ENCODE measurements at regions of chr1 and their contacts with region 1.

Region 1: DNA sequence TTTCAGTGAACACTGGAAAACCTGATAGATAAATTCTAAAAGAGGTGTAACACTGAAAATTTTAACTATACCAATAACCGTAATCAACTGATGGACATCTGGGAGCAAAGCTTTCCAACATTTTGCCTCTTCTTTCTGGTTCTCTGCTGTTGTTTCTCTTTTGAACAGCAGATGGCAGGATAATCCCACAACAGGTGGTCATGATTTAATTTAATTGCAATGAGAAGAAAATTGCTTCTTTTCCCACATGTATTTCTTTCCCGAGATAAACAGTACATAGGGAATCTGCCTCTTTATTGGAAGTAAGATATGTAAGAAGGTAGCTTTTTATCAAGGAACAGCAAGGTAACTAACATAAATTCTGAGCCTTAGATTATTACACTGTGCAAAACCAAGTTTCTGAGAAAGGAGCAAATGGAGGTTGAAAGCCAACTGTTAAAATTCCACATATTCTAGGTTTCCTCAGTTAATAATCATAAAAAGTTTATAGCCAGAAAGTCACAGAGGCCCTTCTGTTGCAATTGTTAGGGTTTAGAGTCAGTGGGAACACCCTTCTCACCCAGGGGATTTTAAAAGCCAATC is 72.9 kb downstream of the RPS6KA1 start:
- DNase-seq: no peak
- H3K4me3 ChIP-seq: no peak overlapping the region
- CTCF ChIP-seq: peak; percentile 47

Region 2: GRCh38 chr1:26582836-26583460 is 19.5 kb before region 1 on chr1:
- CTCF ChIA-PET with region 1: interaction called, 53 read pairs
- POLR2A ChIA-PET with region 1: no interaction called
- DNase-seq: no peak
- H3K4me3 ChIP-seq: no peak overlapping the region
- CTCF ChIP-seq: no peak

Region 3: GRCh38 chr1:26728645-26729044 is 126.2 kb after region 1 on chr1:
- CTCF ChIA-PET with region 1: interaction called, 13 read pairs
- POLR2A ChIA-PET with region 1: no interaction called
- DNase-seq: no peak
- H3K4me3 ChIP-seq: no peak overlapping the region
- CTCF ChIP-seq: no peak

Region 4: GRCh38 chr1:26811057-26811456 is 208.6 kb after region 1 on chr1:
- CTCF ChIA-PET with region 1: interaction called, 52 read pairs
- POLR2A ChIA-PET with region 1: no interaction called
- DNase-seq: no peak
- H3K4me3 ChIP-seq: no peak overlapping the region
- CTCF ChIP-seq: no peak

Region 5: DNA sequence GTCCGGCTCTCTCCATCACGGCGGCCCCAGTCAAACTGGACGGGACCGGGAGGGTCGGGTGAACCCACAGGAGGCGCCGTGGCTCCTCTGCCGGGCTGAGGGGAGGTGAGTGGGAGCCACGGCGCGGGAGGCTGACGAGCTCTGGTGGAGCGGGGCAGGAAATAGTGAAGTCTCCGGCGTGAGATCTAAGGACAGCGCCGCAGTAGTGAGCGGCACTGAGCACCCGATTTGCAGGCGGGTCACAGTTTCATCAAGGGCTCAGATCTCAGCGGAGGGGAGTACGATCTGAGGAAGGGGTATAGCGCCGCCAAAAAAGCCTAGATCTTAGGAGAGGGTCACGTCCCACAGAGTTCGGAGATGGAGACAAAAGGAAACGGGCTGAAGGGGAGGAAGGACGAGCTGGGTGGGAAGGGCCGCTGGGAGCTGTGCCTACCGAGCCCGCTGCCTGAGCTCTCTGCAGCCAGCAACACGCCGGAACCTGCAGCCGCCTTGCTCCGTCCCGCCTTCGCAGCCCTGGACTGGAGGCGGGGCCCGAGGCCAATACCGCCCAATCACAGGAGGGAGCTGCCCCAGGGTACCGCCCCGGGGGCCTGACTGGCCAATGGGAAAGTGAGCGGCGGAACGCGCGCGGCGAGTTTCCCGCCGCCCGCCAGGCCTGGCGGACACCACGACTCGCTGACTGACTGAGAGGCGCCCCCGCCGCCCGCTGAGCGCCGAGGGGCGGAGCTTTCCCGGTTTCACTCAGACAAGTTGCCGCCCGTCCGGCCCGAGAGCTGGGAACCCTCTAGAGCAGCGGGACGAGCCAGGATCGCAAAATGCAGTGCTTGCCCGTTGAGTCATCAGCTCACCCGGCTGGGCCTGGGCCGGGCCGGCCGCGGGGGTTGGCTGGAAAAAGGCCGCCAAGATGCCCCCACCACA is 262.4 kb after region 1 on chr1:
- CTCF ChIA-PET with region 1: interaction called, 205 read pairs
- POLR2A ChIA-PET with region 1: interaction called, 4 read pairs
- DNase-seq: peak; percentile 86
- H3K4me3 ChIP-seq: peak overlapping the region; percentile 59
- CTCF ChIP-seq: no peak

Measured in AG04449 (cell line).